ENCODE measurements at regions of chr10 and their contacts with region 1.

Region 1: GRCh38 chr10:97701438-97702069 is 12.0 kb upstream of the MARVELD1 start:
- DNase-seq: peak; percentile 70
- ATAC-seq: peak; percentile 90
- H3K4me3 ChIP-seq: no peak overlapping the region
- H3K27ac ChIP-seq: no peak overlapping the region
- H3K4me1 ChIP-seq: peaks cover 49% of the 10 kb centered on the region
- H3K27me3 ChIP-seq: no peaks in the 10 kb centered on the region
- CTCF ChIP-seq: peak; percentile 89
- EP300 ChIP-seq: no peak
- POLR2A ChIP-seq: no peak
- RAD21 ChIP-seq: peak; percentile 75

Region 2: DNA sequence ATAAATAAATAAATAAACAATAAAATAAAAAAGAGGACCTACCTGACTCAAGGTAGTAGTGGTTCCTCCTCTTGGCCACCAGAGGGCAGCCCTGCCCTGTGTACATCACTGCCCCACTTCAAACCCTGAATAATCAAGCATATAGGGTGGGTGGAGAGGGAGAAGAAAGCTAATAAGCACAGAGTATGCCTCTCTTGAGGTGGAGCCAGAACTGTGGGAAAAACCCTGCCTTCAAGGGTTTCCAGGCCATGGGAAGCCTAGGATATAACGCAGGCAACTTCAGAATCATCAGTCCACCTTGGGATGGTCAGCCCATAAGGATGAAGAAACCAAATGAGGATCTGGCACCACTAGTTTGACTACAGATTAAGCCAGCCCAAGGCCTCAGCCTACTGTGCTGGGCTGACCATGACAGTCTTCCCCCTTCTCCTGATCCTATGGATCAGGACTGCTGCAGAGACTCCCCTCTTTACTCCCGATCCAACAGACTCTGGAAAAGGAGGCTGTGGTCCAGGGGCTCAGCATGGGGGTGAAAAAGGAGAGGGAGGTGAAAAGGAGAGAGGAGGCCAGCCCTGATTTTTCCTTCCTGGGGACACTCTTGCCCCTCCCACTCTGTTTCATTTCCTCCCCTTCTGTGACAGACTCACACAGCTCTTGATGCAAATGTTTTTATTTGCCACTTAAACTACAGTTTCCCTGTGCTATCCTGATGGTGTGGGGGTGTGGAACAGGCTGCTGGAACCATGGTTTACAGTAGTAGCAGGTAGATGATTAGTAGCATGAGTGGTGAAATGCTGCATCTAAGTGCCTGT is 24.6 kb before region 1 on chr10:
- CTCF ChIA-PET with region 1: interaction called, 10 read pairs
- POLR2A ChIA-PET with region 1: interaction called, 3 read pairs
- in situ Hi-C with region 1: no loop called
- intact Hi-C with region 1: loop called (anchors 1 kb)
- DNase-seq: peak; percentile 49
- ATAC-seq: peak; percentile 75
- H3K4me3 ChIP-seq: no peak overlapping the region
- H3K27ac ChIP-seq: no peak overlapping the region
- H3K4me1 ChIP-seq: peaks cover 3% of the 10 kb centered on the region
- H3K27me3 ChIP-seq: no peaks in the 10 kb centered on the region
- CTCF ChIP-seq: peak; percentile 82
- EP300 ChIP-seq: no peak
- POLR2A ChIP-seq: peak; percentile 22 to 25; a peak in 1 of 4 replicates
- RAD21 ChIP-seq: peak; percentile 74

Region 3: DNA sequence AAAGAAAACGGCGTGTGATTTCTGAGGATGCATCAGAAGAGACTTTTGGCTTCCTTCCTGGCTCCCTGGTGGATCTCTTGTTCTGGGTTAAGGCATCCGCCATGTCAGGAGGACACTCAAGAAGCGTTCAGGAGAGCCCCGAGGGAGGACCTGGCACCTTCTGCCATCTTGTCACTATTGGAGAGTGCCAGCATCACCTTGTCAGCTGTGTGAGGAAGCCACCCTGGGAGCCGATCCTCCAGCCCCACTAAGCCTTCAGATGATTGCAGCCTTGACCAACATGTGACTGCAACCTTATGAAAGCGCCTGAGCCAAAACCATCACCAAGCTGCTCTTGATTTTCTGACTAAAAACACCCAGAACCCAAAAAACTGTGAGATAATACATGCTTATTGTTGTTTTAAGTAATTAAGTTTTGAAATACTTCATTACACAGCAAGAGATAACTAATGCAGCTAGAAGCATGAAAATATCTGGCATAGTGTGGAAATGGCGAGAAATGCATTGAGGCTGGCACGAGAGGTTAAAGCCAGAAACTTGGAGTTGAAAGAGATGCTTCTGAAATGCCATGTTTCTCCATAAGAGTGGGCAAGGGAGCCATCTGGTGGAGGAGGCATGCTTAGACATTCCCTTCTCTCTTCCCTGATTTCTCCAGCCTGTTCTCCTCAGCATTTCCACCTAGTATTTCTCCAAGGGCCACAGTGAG is 29.9 kb after region 1 on chr10:
- CTCF ChIA-PET with region 1: interaction called, 18 read pairs
- POLR2A ChIA-PET with region 1: interaction called, 10 read pairs
- in situ Hi-C with region 1: loop called (anchors 5 kb)
- intact Hi-C with region 1: no loop called
- DNase-seq: peak; percentile 66
- ATAC-seq: peak; percentile 76
- H3K4me3 ChIP-seq: no peak overlapping the region
- H3K27ac ChIP-seq: no peak overlapping the region
- H3K4me1 ChIP-seq: peaks cover 11% of the 10 kb centered on the region
- H3K27me3 ChIP-seq: peaks cover 0 to 10% of the 10 kb centered on the region in 2 experiments; a peak in 2 of 5 replicates
- CTCF ChIP-seq: peak; percentile 94
- EP300 ChIP-seq: no peak
- POLR2A ChIP-seq: no peak
- RAD21 ChIP-seq: peak; percentile 89

Region 4: GRCh38 chr10:97736902-97737769 is 35.6 kb after region 1 on chr10 and contains the start of gene ZFYVE27:
- CTCF ChIA-PET with region 1: interaction called, 18 read pairs
- POLR2A ChIA-PET with region 1: interaction called, 10 read pairs
- in situ Hi-C with region 1: loop called (anchors 5 kb)
- intact Hi-C with region 1: no loop called
- DNase-seq: peak; percentile 87
- ATAC-seq: peak; percentile 83
- H3K4me3 ChIP-seq: peak within 1 kb of the TSS; percentile 82 to 95 (median 91)
- H3K27ac ChIP-seq: peak within 1 kb of the TSS; percentile 88
- H3K4me1 ChIP-seq: peaks cover 27% of the 10 kb centered on the region
- H3K27me3 ChIP-seq: peaks cover 0 to 10% of the 10 kb centered on the region in 2 experiments; a peak in 2 of 5 replicates
- CTCF ChIP-seq: peak; percentile 19; the same call in 1 of the 2 replicates
- EP300 ChIP-seq: no peak; a peak in 1 of 4 replicates
- POLR2A ChIP-seq: peak; percentile 89 to 93
- RAD21 ChIP-seq: peak; percentile 20; the same call in 1 of the 2 replicates
- total RNA-seq, gene ZFYVE27: 6.1 and 19.7 TPM in 2 replicates